PC-9 (cell line): ENCODE measurements at regions of chr12 and their contacts with region 1.

Region 1: DNA sequence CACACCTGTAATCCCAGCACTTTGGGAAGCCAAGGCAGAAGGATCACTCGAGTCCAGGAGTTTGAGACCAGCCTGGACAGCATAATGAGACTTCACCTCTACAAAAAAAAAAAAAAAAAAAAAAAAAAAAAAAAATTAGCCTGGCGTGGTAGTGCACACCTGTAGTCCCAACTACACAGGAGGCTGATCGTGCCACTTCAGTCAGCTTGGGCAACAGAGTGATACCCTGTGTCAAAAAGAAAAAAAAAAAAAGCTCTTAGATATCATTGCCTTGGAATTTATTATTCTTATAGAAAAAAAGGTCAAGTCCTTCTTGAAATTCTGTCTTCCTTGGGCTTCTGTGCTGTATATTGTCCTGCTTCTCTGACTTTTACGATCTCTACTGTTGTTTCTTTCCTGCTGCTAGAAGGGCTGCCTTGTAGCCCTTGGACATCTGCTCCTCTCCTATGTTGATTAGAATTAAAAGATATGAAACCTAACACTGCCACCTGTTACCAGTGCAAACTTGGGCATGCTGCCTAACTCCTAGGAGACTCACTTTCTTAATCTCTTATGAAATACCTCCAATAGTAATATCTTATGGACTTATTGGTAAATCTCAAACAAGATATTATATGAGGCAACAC is 5.7 kb downstream of the TMEM19 start:
- DNase-seq: no peak
- H3K4me3 ChIP-seq: no peak overlapping the region
- H3K27ac ChIP-seq: no peak overlapping the region
- H3K4me1 ChIP-seq: peaks cover 13% of the 10 kb centered on the region
- H3K27me3 ChIP-seq: no peaks in the 10 kb centered on the region
- CTCF ChIP-seq: no peak

Region 2: DNA sequence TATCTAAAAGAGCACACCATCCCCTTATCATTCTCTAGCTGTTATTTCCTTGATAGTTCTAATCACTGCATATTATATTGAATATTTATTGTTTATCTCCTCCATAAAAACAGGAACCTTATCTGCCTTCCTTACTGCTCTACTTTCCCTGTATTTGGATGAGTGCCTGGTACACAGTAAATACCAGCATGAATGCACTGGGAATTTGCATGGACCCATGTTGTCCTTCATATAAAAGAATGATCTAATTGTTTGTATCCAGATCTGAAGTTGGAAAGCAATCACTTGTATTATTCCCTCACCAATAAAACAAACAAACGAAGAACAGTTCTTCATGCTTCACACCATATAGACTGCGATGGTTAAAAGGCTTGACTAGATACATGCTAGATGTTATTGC is 1463.7 kb before region 1 on chr12:
- CTCF ChIA-PET with region 1: no interaction called
- POLR2A ChIA-PET with region 1: interaction called, 22 read pairs
- intact Hi-C with region 1: no loop called
- DNase-seq: no peak
- H3K4me3 ChIP-seq: no peak overlapping the region
- H3K27ac ChIP-seq: no peak overlapping the region
- H3K4me1 ChIP-seq: no peaks in the 10 kb centered on the region
- H3K27me3 ChIP-seq: no peaks in the 10 kb centered on the region
- CTCF ChIP-seq: no peak

Region 3: GRCh38 chr12:71602745-71603577 is 88.7 kb before region 1 on chr12:
- CTCF ChIA-PET with region 1: no interaction called
- POLR2A ChIA-PET with region 1: no interaction called
- intact Hi-C with region 1: no loop called
- DNase-seq: no peak
- H3K4me3 ChIP-seq: no peak overlapping the region
- H3K27ac ChIP-seq: no peak overlapping the region
- H3K4me1 ChIP-seq: no peaks in the 10 kb centered on the region
- H3K27me3 ChIP-seq: no peaks in the 10 kb centered on the region
- CTCF ChIP-seq: no peak